ENCODE measurements at regions of chr13 and their contacts with region 1.

Region 1: GRCh38 chr13:97879646-97880310 is 73.7 kb upstream of the IPO5 start:
- DNase-seq: no peak
- H3K4me3 ChIP-seq: no peak overlapping the region
- H3K4me3 Mint-ChIP-seq: no peak overlapping the region
- H3K27ac Mint-ChIP-seq: no peak overlapping the region
- H3K4me1 ChIP-seq: 0 out of 2 replicates have a peak, but pooled peaks cover 2% of the 10 kb centered on the region
- H3K4me1 Mint-ChIP-seq: no peaks in the 10 kb centered on the region
- H3K27me3 ChIP-seq: peaks cover 2% of the 10 kb centered on the region; the same call in 1 of the 2 replicates
- H3K27me3 Mint-ChIP-seq: peaks cover 22% of the 10 kb centered on the region
- CTCF ChIP-seq: no peak

Region 2: GRCh38 chr13:97932011-97932410 is 52.2 kb after region 1 on chr13:
- CTCF ChIA-PET with region 1: no interaction called
- POLR2A ChIA-PET with region 1: no interaction called
- intact Hi-C with region 1: no loop called
- DNase-seq: no peak
- H3K4me3 ChIP-seq: no peak overlapping the region
- H3K4me3 Mint-ChIP-seq: no peak overlapping the region
- H3K27ac Mint-ChIP-seq: no peak overlapping the region
- H3K4me1 ChIP-seq: no peaks in the 10 kb centered on the region
- H3K4me1 Mint-ChIP-seq: no peaks in the 10 kb centered on the region
- H3K27me3 ChIP-seq: no peaks in the 10 kb centered on the region
- H3K27me3 Mint-ChIP-seq: peaks cover 15% of the 10 kb centered on the region
- CTCF ChIP-seq: no peak

Region 3: DNA sequence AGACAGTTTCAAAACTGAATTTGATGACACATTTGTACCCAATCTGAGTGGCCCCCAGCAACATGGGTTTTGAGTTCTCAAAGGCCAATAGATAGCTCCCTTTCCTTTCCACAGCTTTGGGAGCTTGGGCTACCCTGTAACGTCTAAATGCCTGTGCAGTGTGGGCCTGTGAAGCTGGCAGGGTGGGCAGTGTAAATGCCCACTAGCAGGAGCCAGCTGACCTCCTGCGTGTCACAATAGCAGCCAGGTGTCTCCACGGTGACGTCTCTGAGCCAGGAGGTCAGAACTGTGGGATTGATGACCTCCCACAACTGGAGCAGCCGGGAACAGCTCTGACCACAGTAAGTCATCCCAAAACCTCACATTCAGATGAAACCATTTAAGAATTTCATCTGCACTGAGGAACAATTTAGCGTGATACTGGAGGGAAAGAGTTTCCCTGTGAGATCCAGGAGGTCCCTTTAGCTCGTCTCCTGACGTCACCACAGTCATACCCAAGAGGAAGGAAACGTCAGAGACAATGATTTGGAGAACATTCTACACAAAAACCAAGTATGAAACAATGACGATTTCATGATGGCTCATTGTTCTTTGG is 73.7 kb after region 1 on chr13 and contains the start of gene IPO5:
- CTCF ChIA-PET with region 1: no interaction called
- POLR2A ChIA-PET with region 1: interaction called, 15 read pairs
- intact Hi-C with region 1: no loop called
- DNase-seq: no peak
- H3K4me3 ChIP-seq: no peak within 1 kb of the TSS
- H3K4me3 Mint-ChIP-seq: no peak within 1 kb of the TSS
- H3K27ac Mint-ChIP-seq: no peak within 1 kb of the TSS
- H3K4me1 ChIP-seq: no peaks in the 10 kb centered on the region
- H3K4me1 Mint-ChIP-seq: no peaks in the 10 kb centered on the region
- H3K27me3 ChIP-seq: no peaks in the 10 kb centered on the region
- H3K27me3 Mint-ChIP-seq: no peaks in the 10 kb centered on the region
- CTCF ChIP-seq: no peak
- total RNA-seq, gene IPO5: 247 and 253 TPM in 2 replicates

Measured in Caco-2 (cell line).